Activated naive CD4-positive, alpha-beta T cell treated with anti-CD3 and anti-CD28 coated beads, Interleukin-2, amount 10 ng/mL, durations not matched to agents 7 days and 5 days (primary cell): ENCODE measurements at regions of chr7 and their contacts with region 1.

Region 1: GRCh38 chr7:107150375-107151073 is 18.3 kb upstream of the HBP1 start:
- DNase-seq: peak; percentile 87
- H3K4me3 Mint-ChIP-seq: no peak overlapping the region
- H3K27ac Mint-ChIP-seq: no peak overlapping the region
- H3K4me1 Mint-ChIP-seq: no peaks in the 10 kb centered on the region
- H3K27me3 Mint-ChIP-seq: no peaks in the 10 kb centered on the region

Region 2: GRCh38 chr7:106793015-106793975 is 357.2 kb before region 1 on chr7:
- CTCF ChIA-PET with region 1: interaction called, 67 read pairs
- DNase-seq: peak; percentile 46
- H3K4me3 Mint-ChIP-seq: no peak overlapping the region
- H3K27ac Mint-ChIP-seq: no peak overlapping the region
- H3K4me1 Mint-ChIP-seq: no peaks in the 10 kb centered on the region
- H3K27me3 Mint-ChIP-seq: peaks cover 12% of the 10 kb centered on the region

Region 3: DNA sequence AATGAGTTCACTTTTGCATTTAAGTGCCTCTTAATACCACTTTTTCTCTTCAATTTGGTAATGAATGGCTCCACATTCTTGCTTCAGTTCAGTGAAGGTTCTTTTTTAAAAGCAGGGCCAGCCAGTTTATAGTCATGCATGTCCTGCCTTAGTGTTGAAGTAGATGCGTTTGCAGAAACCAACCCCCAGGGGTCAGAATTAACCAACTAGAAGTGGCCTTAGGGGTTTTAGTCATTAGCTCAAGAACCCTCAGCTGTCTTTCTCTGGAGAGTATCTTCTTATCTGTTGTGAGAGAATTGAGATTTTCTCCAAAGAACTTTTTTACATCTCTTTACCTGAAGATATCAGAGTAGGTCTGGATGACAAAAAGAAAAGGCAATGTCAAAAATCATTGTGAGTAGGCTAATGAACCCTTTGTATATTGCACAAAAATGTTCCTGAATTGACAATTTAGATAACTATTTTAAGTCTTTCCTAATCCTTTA is 203.2 kb before region 1 on chr7:
- CTCF ChIA-PET with region 1: interaction called, 55 read pairs
- DNase-seq: peak; percentile 53
- H3K4me3 Mint-ChIP-seq: no peak overlapping the region
- H3K27ac Mint-ChIP-seq: no peak overlapping the region
- H3K4me1 Mint-ChIP-seq: no peaks in the 10 kb centered on the region
- H3K27me3 Mint-ChIP-seq: peaks cover 11% of the 10 kb centered on the region

Region 4: GRCh38 chr7:107130487-107131225 is 19.9 kb before region 1 on chr7:
- CTCF ChIA-PET with region 1: interaction called, 23 read pairs
- DNase-seq: no peak
- H3K4me3 Mint-ChIP-seq: no peak overlapping the region
- H3K27ac Mint-ChIP-seq: no peak overlapping the region
- H3K4me1 Mint-ChIP-seq: peaks cover 24% of the 10 kb centered on the region
- H3K27me3 Mint-ChIP-seq: no peaks in the 10 kb centered on the region

Region 5: DNA sequence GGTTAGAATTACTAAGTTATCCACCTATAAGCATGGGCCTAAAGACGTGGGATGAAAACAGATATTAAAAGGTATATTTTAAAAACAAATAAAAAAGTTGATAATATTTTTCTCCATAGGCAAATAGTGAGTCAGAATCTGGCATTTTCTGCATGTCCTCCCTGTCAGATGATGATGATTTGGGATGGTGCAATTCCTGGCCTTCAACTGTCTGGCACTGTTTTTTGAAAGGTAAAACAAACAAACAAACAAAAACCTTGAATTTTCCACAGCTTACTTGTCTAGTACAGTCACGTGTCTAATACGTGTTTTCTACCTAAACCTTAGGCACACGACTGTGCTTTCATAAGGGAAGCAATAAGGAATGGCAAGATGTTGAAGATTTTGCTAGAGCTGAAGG is 35.7 kb after region 1 on chr7:
- CTCF ChIA-PET with region 1: no interaction called
- DNase-seq: no peak
- H3K4me3 Mint-ChIP-seq: no peak overlapping the region
- H3K27ac Mint-ChIP-seq: no peak overlapping the region
- H3K4me1 Mint-ChIP-seq: no peaks in the 10 kb centered on the region
- H3K27me3 Mint-ChIP-seq: no peaks in the 10 kb centered on the region

Region 6: GRCh38 chr7:108016841-108017775 is 866.6 kb after region 1 on chr7:
- CTCF ChIA-PET with region 1: no interaction called
- DNase-seq: no peak
- H3K4me3 Mint-ChIP-seq: no peak overlapping the region
- H3K27ac Mint-ChIP-seq: no peak overlapping the region
- H3K4me1 Mint-ChIP-seq: no peaks in the 10 kb centered on the region
- H3K27me3 Mint-ChIP-seq: peaks cover 4% of the 10 kb centered on the region